ENCODE measurements at regions of chr13 and their contacts with region 1.

Region 1: DNA sequence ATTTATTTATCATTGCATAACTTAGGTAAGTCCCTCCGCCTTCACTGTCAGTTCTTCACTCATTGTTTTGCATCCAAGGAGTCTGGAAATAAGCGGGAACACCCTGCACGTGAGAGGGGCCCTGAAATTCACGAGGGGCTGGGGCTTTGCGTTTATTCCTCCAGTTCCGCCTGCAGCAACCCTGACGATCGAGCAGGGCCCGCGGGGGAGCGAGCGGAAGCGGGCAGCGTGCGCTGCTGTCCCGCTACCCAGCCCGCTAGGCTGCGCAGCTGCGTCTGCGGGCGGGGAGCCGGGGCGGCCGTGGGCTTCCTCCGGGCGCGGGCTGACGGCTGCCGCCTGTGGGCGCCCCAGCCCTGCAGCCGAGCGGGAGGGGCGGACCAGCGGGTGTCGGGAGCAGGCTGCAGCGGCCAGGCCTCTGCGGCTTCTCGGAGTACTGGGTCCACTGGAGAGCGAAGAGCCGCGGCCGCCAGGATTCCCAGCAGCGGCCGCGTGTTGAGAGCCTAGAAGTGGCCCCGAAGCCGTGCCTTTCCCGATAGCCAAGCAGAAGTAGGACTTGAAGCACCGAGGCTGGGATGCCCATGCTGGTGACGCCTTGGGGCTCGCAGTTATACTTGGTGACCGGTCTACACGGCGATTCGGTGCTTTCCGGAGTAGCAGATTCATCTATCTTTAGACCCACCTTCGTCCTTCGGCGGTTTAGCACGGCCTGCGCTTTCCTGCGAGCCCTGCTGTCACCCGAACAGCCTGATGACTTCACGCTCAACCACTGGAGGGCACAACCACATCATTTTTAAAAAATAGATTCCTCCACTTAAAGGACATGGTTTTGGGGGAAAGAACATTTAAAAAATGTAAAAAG is 32.9 kb upstream of the SACS start:
- DNase-seq: peak; percentile 77
- ATAC-seq: peak; percentile 74
- H3K4me3 ChIP-seq: peak overlapping the region; percentile 64
- H3K27ac ChIP-seq: peak overlapping the region; percentile 53
- H3K4me1 ChIP-seq: peaks cover 25% of the 10 kb centered on the region
- H3K27me3 ChIP-seq: no peaks in the 10 kb centered on the region
- CTCF ChIP-seq: peak; percentile 56

Region 2: GRCh38 chr13:23570099-23570920 is 103.9 kb after region 1 on chr13 and contains the start of gene TNFRSF19:
- CTCF ChIA-PET with region 1: interaction called, 3 read pairs
- POLR2A ChIA-PET with region 1: no interaction called
- intact Hi-C with region 1: loop called (anchors 2 kb)
- DNase-seq: peak; percentile 35
- ATAC-seq: peak; percentile 65
- H3K4me3 ChIP-seq: peak within 1 kb of the TSS; percentile 46
- H3K27ac ChIP-seq: no peak within 1 kb of the TSS
- H3K4me1 ChIP-seq: peaks cover 14% of the 10 kb centered on the region; the same call in 1 of the 2 replicates
- H3K27me3 ChIP-seq: no peaks in the 10 kb centered on the region
- CTCF ChIP-seq: no peak
- total RNA-seq, gene TNFRSF19: 4.7 and 6.1 TPM in 2 replicates

Region 3: DNA sequence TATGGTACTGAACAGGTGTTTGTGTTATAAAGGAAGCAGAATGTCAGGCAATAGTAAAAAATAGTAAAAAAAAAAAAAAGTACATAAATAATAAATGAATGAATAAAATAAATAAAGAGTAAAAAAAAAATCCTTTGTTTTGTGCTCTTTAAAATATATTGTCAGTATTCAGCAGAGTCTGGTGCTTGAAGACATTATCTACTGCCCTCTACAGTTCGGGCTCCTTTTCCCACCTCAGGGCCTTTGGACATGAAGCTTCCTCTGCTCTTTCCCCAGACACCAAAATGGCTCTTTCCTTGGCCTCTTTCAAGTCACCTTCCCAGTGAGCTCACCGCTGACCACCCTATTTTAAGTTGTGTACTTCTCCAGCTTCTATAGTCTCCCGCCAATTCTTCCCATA is 241.3 kb after region 1 on chr13:
- CTCF ChIA-PET with region 1: interaction called, 3 read pairs
- POLR2A ChIA-PET with region 1: no interaction called
- intact Hi-C with region 1: loop called (anchors 2 kb)
- DNase-seq: peak; percentile 57
- ATAC-seq: peak; percentile 64
- H3K4me3 ChIP-seq: no peak overlapping the region
- H3K27ac ChIP-seq: no peak overlapping the region
- H3K4me1 ChIP-seq: no peaks in the 10 kb centered on the region
- H3K27me3 ChIP-seq: no peaks in the 10 kb centered on the region
- CTCF ChIP-seq: peak; percentile 50

Region 4: GRCh38 chr13:23871616-23872220 is 405.3 kb after region 1 on chr13:
- CTCF ChIA-PET with region 1: interaction called, 3 read pairs
- POLR2A ChIA-PET with region 1: no interaction called
- intact Hi-C with region 1: loop called (anchors 1 kb)
- DNase-seq: peak; percentile 58
- ATAC-seq: no peak
- H3K4me3 ChIP-seq: no peak overlapping the region
- H3K27ac ChIP-seq: peak overlapping the region; percentile 62
- H3K4me1 ChIP-seq: peaks cover 44% of the 10 kb centered on the region
- H3K27me3 ChIP-seq: no peaks in the 10 kb centered on the region
- CTCF ChIP-seq: peak; percentile 74

Measured in PC-3 (cell line).